Activated B cell treated with CpG ODN at 0.5 μM for 24 hours (primary cell): ENCODE measurements at regions of chr17 and their contacts with region 1.

Region 1: GRCh38 chr17:41315814-41316445 is 420 bp upstream of the KRTAP17-1 start:
- DNase-seq: no peak
- ATAC-seq: no peak
- H3K4me3 Mint-ChIP-seq: no peak overlapping the region
- H3K27ac Mint-ChIP-seq: no peak overlapping the region
- H3K4me1 Mint-ChIP-seq: no peaks in the 10 kb centered on the region
- H3K27me3 Mint-ChIP-seq: peaks cover 19% of the 10 kb centered on the region
- CTCF ChIP-seq: no peak

Region 2: DNA sequence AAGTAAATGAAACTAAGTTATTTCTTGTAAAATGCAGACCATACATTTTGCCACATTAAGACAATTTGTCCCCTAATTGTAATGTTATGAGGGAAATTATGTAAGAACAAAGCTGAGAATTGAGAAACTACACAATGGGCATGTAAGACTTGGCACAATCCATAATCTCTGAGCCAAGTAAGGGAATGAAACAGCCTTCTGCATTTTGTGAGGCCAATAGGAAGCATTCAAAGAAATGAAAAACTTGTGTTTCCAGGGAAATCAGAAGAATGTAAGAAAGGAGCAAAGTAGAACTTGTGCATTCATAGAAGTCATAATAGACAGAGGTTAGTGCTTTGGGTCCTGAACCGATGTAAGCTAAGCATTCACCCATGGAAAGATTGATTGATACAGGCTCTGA is 64.7 kb before region 1 on chr17:
- CTCF ChIA-PET with region 1: no interaction called
- POLR2A ChIA-PET with region 1: no interaction called
- intact Hi-C with region 1: loop called (anchors 2 kb)
- DNase-seq: no peak
- ATAC-seq: no peak
- H3K4me3 Mint-ChIP-seq: no peak overlapping the region
- H3K27ac Mint-ChIP-seq: no peak overlapping the region
- H3K4me1 Mint-ChIP-seq: no peaks in the 10 kb centered on the region
- H3K27me3 Mint-ChIP-seq: peaks cover 12% of the 10 kb centered on the region
- CTCF ChIP-seq: no peak